Activated naive CD4-positive, alpha-beta T cell treated with anti-CD3 and anti-CD28 coated beads for 36 hours (primary cell): ENCODE measurements at regions of chr2 and their contacts with region 1.

Region 1: DNA sequence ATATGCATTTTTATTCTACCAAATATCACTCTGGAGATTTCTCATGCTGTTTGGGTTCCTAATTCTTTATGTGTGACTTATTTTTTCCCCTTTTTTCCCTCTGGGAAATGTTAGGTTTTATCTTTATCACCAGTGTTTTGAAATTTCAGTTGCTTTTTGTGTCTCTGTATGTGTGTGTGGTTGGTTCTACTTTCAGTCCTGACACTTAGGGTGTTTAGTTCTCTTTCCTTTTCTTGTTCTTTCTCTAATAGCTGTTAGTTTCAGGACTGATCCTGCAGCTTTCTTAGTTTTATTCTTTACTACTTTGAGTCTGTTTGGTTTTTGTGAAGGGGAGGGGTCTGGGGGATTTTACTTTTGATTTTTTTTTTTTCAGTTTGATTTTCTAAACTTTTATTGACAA is 23.1 kb downstream of the PPM1B start:
- DNase-seq: no peak
- H3K4me3 Mint-ChIP-seq: no peak overlapping the region
- H3K27ac Mint-ChIP-seq: peak overlapping the region; percentile 68
- H3K4me1 Mint-ChIP-seq: peaks cover 65% of the 10 kb centered on the region
- H3K27me3 Mint-ChIP-seq: no peaks in the 10 kb centered on the region

Region 2: GRCh38 chr2:44107085-44107740 is 84.5 kb before region 1 on chr2:
- CTCF ChIA-PET with region 1: no interaction called
- intact Hi-C with region 1: no loop called
- DNase-seq: no peak
- H3K4me3 Mint-ChIP-seq: no peak overlapping the region
- H3K27ac Mint-ChIP-seq: no peak overlapping the region
- H3K4me1 Mint-ChIP-seq: peaks cover 9% of the 10 kb centered on the region
- H3K27me3 Mint-ChIP-seq: no peaks in the 10 kb centered on the region

Region 3: GRCh38 chr2:44237221-44237620 is 45.5 kb after region 1 on chr2:
- CTCF ChIA-PET with region 1: no interaction called
- intact Hi-C with region 1: loop called (anchors 5 kb)
- DNase-seq: peak; percentile 40
- H3K4me3 Mint-ChIP-seq: no peak overlapping the region
- H3K27ac Mint-ChIP-seq: no peak overlapping the region
- H3K4me1 Mint-ChIP-seq: peaks cover 32% of the 10 kb centered on the region
- H3K27me3 Mint-ChIP-seq: no peaks in the 10 kb centered on the region

Region 4: DNA sequence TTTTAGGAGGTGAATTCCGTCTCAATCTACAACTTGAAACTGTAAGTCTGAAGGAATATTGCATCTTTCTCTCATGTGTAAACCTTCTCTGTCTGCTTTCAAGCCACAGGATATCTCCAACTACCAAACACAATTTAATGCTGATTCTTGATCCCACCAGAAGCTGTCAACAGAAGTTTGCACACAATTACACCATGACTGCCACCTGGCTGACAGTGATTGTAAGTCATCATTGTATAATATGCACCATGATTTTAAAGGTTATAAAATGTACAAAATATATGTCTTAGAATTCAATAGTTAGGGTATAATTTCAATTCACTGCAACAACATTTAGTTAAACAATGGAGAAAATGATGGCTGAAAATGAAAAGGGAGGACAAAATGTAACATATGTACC is 151.1 kb after region 1 on chr2:
- CTCF ChIA-PET with region 1: no interaction called
- intact Hi-C with region 1: no loop called
- DNase-seq: peak; percentile 30
- H3K4me3 Mint-ChIP-seq: no peak overlapping the region
- H3K27ac Mint-ChIP-seq: no peak overlapping the region
- H3K4me1 Mint-ChIP-seq: no peaks in the 10 kb centered on the region
- H3K27me3 Mint-ChIP-seq: no peaks in the 10 kb centered on the region